ENCODE measurements at regions of chr5 and their contacts with region 1.

Region 1: DNA sequence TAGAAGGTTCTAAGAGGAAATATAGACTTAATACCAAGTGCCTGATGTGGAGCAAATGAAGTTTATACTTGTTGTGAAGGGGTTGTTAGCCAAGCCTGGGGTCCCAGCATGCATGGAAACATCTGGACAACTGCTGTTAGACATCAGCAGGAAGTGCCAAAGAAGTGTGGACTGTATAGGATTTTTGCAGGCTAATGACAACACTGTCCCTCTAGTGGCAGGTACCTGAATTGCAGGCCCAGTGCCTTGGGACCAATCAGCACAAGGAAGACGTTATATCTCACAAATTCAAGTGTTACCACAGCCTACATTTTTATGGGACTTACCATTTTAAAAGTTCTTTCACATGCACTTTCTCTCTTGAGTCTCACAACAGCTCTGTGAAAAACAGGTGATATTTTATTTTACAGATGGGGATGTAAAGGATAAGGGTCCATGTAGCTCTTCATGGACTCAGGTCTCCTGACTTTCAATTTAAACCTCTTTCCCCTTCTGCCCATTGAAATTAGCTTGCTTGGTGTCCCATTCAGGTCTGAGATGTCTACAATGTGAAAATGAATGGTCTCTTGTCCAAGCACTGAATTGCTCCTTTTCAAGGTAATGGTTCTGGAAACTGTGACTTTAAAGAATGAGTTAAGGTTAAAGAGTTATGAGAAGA is 89.0 kb upstream of the MAP1B start:
- DNase-seq: peak; percentile 66 to 75 (median 70)
- ATAC-seq: peak; percentile 93
- H3K4me3 ChIP-seq: no peak overlapping the region
- H3K27ac ChIP-seq: no peak overlapping the region
- H3K4me1 ChIP-seq: peaks cover 0 to 6% of the 10 kb centered on the region in 2 experiments; a peak in 2 of 5 replicates
- H3K27me3 ChIP-seq: peaks cover 0 to 8% of the 10 kb centered on the region in 2 experiments; a peak in 2 of 5 replicates
- CTCF ChIP-seq: peak; percentile 75 to 97 (median 89)
- EP300 ChIP-seq: no peak
- POLR2A ChIP-seq: no peak
- RAD21 ChIP-seq: peak; percentile 54 to 73

Region 2: DNA sequence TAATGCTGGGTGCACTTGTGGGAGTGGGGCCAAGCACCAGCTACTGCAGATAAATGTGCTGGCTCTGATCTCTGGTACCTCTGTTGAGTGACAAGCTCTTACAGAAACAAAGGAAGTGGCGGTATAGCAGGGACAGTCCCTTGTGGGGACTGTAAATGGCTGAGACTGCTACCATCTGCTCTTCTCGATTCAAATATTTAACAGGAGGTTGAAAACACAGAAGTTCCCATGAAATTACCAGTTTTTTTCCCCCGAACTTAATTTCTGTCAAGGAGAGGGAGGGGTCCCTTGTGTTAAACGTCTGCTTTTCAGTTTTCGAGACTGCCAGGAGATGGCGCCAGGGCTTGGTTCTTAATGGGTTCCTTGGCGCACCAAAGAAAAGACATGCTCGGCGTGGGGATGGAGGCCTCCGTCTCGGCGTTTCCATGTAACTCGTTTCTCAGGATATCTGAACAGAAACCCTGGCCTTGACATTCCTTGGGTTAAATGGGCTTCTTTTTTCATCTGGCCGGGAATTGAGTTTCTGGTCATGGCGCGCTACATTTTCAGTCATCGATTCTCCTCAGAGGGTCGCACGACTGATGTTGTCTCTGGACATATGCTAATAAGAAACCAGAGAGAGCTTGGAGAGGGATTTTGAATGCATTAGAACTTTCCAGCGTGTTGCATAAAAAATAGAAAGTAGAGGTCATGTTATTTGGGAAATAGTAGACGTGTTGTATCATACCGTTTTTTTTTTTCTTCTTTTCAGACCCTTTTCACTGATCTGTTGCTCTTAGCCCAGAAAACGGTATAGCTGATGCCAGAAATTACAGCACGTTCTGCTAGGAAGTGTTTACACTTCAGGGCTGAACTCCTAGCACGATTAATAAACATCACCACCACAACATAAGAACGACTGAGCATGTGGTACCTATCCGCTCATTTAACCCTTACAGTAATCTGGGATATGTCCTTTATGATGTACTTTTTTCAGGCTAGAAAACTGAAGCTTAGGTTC is 235.2 kb before region 1 on chr5:
- CTCF ChIA-PET with region 1: no interaction called
- POLR2A ChIA-PET with region 1: no interaction called
- in situ Hi-C with region 1: no loop called
- intact Hi-C with region 1: loop called (anchors 5 kb)
- DNase-seq: peak; percentile 58 to 75 (median 60)
- ATAC-seq: peak; percentile 98
- H3K4me3 ChIP-seq: no peak overlapping the region
- H3K27ac ChIP-seq: no peak overlapping the region
- H3K4me1 ChIP-seq: no peaks in the 10 kb centered on the region
- H3K27me3 ChIP-seq: peaks cover 2 to 18% of the 10 kb centered on the region in 2 experiments; a peak in 4 of 5 replicates
- CTCF ChIP-seq: peak; percentile 77 to 87 (median 85)
- EP300 ChIP-seq: no peak
- POLR2A ChIP-seq: no peak
- RAD21 ChIP-seq: peak; percentile 82 to 83

Region 3: GRCh38 chr5:71899865-71900342 is 118.4 kb before region 1 on chr5:
- CTCF ChIA-PET with region 1: no interaction called
- POLR2A ChIA-PET with region 1: no interaction called
- in situ Hi-C with region 1: no loop called
- intact Hi-C with region 1: no loop called
- DNase-seq: no peak
- ATAC-seq: no peak
- H3K4me3 ChIP-seq: no peak overlapping the region
- H3K27ac ChIP-seq: no peak overlapping the region
- H3K4me1 ChIP-seq: no peaks in the 10 kb centered on the region
- H3K27me3 ChIP-seq: no peaks in the 10 kb centered on the region
- CTCF ChIP-seq: no peak
- EP300 ChIP-seq: no peak
- POLR2A ChIP-seq: no peak
- RAD21 ChIP-seq: no peak

Region 4: GRCh38 chr5:71974165-71974564 is 44.1 kb before region 1 on chr5:
- CTCF ChIA-PET with region 1: no interaction called
- POLR2A ChIA-PET with region 1: no interaction called
- in situ Hi-C with region 1: no loop called
- intact Hi-C with region 1: no loop called
- DNase-seq: no peak
- ATAC-seq: no peak
- H3K4me3 ChIP-seq: no peak overlapping the region
- H3K27ac ChIP-seq: no peak overlapping the region
- H3K4me1 ChIP-seq: no peaks in the 10 kb centered on the region
- H3K27me3 ChIP-seq: no peaks in the 10 kb centered on the region
- CTCF ChIP-seq: no peak
- EP300 ChIP-seq: no peak
- POLR2A ChIP-seq: no peak
- RAD21 ChIP-seq: no peak

Region 5: DNA sequence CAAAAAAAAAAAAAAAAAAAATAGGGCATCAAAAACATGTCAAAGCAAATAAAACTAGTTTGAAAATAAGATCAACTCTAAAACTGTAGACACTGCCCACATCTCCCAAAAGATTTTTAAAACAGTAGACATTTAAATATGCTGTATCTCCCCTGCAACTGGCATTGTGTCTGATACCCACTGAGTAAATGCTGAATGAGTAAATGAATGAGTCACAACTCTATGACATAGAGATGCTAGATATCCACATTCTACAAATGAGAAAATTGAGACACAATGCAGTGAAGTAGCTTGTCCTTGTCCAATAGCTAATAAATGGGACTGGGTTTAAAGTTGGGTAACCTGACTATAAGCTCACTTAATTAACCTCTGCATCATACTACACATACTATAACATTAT is 74.9 kb after region 1 on chr5:
- CTCF ChIA-PET with region 1: no interaction called
- POLR2A ChIA-PET with region 1: no interaction called
- in situ Hi-C with region 1: no loop called
- intact Hi-C with region 1: no loop called
- DNase-seq: no peak
- ATAC-seq: no peak
- H3K4me3 ChIP-seq: no peak overlapping the region
- H3K27ac ChIP-seq: no peak overlapping the region
- H3K4me1 ChIP-seq: no peaks in the 10 kb centered on the region
- H3K27me3 ChIP-seq: peaks cover 11 to 23% of the 10 kb centered on the region in 2 experiments
- CTCF ChIP-seq: no peak
- EP300 ChIP-seq: no peak
- POLR2A ChIP-seq: no peak
- RAD21 ChIP-seq: no peak

Measured in K562 (cell line).